ENCODE measurements at regions of chr6 and their contacts with region 1.

Region 1: GRCh38 chr6:43769526-43770416 is at the start of gene VEGFA:
- DNase-seq: peak; percentile 94 to 96 (median 96)
- H3K4me3 ChIP-seq: peak within 1 kb of the TSS; percentile 62 to 97 (median 85)
- H3K27ac ChIP-seq: peak within 1 kb of the TSS; percentile 94 to 96
- H3K4me1 ChIP-seq: peaks cover 0 to 5% (median 5%) of the 10 kb centered on the region in 3 donors
- H3K27me3 ChIP-seq: no peaks in the 10 kb centered on the region
- CTCF ChIP-seq: peak; percentile 100
- total RNA-seq, gene VEGFA: 36.3 TPM

Region 2: DNA sequence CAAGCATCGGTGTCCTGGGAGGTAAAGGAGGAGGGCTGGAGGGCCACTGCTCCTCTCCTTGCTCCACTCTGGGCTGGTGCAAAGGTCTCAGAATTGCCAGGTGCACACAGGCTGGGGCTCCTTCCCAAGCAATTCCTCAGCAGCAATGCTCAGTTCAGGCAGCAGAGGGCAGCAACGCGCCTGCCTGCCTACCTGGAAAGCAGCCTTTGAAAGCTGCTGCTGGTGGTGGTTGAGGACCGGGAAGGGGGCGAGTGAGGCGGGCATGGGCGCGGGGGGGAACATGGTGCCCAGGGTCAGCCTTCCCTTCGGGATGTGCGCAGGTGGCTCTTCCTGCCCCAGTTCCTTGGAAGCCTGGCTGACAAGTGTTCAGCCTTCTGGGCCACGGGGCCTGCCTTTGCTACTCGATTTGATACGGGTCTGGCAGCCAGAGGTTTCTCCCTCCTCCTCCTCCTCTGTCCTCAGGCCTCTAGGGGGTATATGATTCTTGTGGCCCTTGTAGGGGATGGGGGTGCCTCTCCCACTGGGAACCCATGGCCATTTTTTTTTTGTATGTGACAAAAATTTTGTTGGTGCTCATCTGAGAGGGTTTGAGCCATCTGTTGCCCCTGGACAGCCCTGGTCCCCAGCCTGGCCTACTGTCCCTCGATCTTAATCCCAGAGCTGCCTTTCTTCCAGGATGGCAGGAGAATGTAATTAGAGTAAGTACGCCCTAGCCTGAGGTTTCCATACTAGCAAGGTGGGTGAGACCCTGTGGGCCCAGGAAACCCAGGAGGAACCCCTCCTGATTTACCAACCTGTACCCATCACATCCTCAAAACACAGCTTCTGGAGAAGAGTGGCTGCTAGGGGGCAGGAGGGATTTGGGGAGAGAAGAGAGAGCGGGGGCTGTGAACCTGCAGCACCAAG is 102.3 kb before region 1 on chr6:
- intact Hi-C with region 1: loop called (anchors 10 kb)
- DNase-seq: peak; percentile 90 to 96 (median 94)
- H3K4me3 ChIP-seq: peak overlapping the region in 1 of 3 donors; percentile 18
- H3K27ac ChIP-seq: peak overlapping the region in 1 of 2 donors; percentile 32
- H3K4me1 ChIP-seq: peaks cover 3 to 17% (median 15%) of the 10 kb centered on the region in 3 donors
- H3K27me3 ChIP-seq: no peaks in the 10 kb centered on the region
- CTCF ChIP-seq: peak; percentile 98

Region 3: DNA sequence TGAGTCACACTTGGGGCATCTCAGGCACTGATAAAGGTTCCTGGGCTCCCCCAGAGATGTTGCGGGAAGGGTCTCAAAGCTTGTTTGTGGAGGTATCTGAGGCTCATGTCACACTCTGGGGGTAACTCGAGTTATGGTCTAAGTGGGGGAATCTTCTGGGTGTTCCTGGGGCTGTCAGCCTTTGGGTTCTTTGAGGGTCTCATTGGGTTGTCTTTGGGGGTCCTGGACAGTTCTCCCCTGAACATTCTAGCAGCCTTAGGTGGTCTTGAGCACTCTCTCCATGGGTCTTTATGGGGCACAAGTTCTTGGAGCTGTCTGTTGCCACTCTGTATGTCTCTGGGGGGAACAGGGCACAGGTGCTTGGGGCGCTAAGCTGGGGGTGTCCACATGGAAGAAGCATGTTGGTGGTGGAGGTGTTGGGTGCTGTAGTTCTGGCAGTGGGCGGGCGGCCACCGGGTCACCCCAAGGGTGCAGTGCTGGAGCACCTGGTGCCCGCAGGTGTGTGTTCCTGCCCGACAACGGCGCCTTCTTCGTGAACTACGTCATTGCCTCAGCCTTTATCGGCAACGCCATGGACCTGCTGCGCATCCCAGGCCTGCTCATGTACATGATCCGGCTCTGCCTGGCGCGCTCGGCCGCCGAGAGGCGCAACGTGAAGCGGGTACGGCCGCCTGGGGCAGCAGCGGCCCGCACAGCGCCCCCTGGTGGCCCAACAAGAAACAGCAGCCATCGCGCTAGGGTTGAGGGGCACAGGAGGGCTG is 381.8 kb after region 1 on chr6:
- intact Hi-C with region 1: no loop called
- DNase-seq: peak; percentile 68 to 89 (median 83)
- H3K4me3 ChIP-seq: no peak overlapping the region
- H3K27ac ChIP-seq: no peak overlapping the region
- H3K4me1 ChIP-seq: no peaks in the 10 kb centered on the region
- H3K27me3 ChIP-seq: no peaks in the 10 kb centered on the region
- CTCF ChIP-seq: peak; percentile 99